ENCODE measurements at regions of chr11 and their contacts with region 1.

Region 1: GRCh38 chr11:73288873-73289707 is 17.0 kb downstream of the P2RY6 start:
- DNase-seq: peak; percentile 62 to 75 (median 73)
- H3K4me3 ChIP-seq: peak overlapping the region in 4 of 7 experiments; percentile 39 to 67 (median 52)
- H3K27ac ChIP-seq: no peak overlapping the region
- H3K4me1 ChIP-seq: peaks cover 0 to 57% (median 27%) of the 10 kb centered on the region in 4 experiments
- H3K27me3 ChIP-seq: no peaks in the 10 kb centered on the region

Region 2: GRCh38 chr11:72831513-72832300 is 457.4 kb before region 1 on chr11:
- CTCF ChIA-PET with region 1: interaction called, 18 read pairs
- POLR2A ChIA-PET with region 1: no interaction called
- DNase-seq: peak; percentile 62 to 81 (median 79)
- H3K4me3 ChIP-seq: no peak overlapping the region
- H3K27ac ChIP-seq: no peak overlapping the region
- H3K4me1 ChIP-seq: peaks cover 0 to 11% (median 4%) of the 10 kb centered on the region in 4 experiments
- H3K27me3 ChIP-seq: no peaks in the 10 kb centered on the region

Region 3: GRCh38 chr11:73168925-73169579 is 120.0 kb before region 1 on chr11:
- CTCF ChIA-PET with region 1: no interaction called
- POLR2A ChIA-PET with region 1: no interaction called
- DNase-seq: no peak
- H3K4me3 ChIP-seq: no peak overlapping the region
- H3K27ac ChIP-seq: no peak overlapping the region
- H3K4me1 ChIP-seq: peaks cover 5 to 29% (median 10%) of the 10 kb centered on the region in 4 experiments
- H3K27me3 ChIP-seq: no peaks in the 10 kb centered on the region

Region 4: GRCh38 chr11:73184953-73185671 is 104.0 kb before region 1 on chr11:
- CTCF ChIA-PET with region 1: interaction called, 92 read pairs
- POLR2A ChIA-PET with region 1: no interaction called
- DNase-seq: peak; percentile 57 to 84 (median 80)
- H3K4me3 ChIP-seq: peak overlapping the region in 6 of 7 experiments; percentile 2 to 76 (median 50)
- H3K27ac ChIP-seq: no peak overlapping the region
- H3K4me1 ChIP-seq: peaks cover 0 to 59% (median 45%) of the 10 kb centered on the region in 4 experiments
- H3K27me3 ChIP-seq: no peaks in the 10 kb centered on the region

Region 5: GRCh38 chr11:73242251-73243079 is 46.6 kb before region 1 on chr11:
- CTCF ChIA-PET with region 1: interaction called, 97 read pairs
- POLR2A ChIA-PET with region 1: no interaction called
- DNase-seq: peak; percentile 66 to 80 (median 78)
- H3K4me3 ChIP-seq: peak overlapping the region in 4 of 7 experiments; percentile 16 to 70 (median 54)
- H3K27ac ChIP-seq: no peak overlapping the region
- H3K4me1 ChIP-seq: peaks cover 0 to 11% (median 9%) of the 10 kb centered on the region in 4 experiments
- H3K27me3 ChIP-seq: no peaks in the 10 kb centered on the region

Region 6: DNA sequence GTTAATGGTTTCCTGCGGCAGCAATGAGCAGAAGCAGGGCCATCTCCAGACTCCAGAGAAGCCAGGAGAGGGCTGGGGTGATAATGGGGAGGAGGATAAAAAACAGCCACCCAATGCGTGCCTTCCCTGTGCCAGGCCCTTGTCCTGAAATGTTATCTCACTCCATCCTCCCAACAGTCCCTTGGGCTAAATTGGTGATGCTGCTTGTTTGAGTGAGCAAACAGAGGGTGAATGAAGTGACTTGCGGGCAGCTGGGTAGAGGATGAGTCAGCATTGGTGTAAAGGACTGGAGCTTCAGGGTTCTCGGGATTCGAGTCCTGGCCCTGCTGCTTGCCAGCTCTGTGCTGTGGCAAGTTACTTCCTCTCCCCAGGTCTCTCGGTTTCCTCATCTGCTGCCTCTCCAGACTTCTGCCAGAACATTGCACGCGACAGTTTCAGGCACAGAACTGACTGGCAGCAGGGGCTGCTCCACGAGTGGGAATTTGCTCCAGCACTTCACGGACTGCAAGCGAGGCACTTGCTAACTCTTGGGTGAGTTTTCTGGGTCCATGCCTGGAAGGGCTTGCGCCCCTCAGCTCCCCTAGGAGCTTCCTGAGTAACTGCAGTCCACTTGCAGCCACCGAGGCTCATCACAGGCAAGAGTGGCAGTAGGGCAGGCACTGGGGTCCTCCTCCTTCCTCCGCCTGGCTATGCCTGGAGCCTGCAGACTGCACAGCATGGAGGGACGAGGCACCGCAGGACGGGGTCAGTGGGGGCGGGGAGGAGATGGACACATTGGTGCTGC is 17.0 kb before region 1 on chr11 and contains the start of gene P2RY6:
- CTCF ChIA-PET with region 1: interaction called, 154 read pairs
- POLR2A ChIA-PET with region 1: no interaction called
- DNase-seq: peak in 2 of 3 donors; percentile 56 to 60
- H3K4me3 ChIP-seq: peak within 1 kb of the TSS in 1 of 7 experiments; percentile 4
- H3K27ac ChIP-seq: no peak within 1 kb of the TSS
- H3K4me1 ChIP-seq: peaks cover 0 to 68% (median 10%) of the 10 kb centered on the region in 4 experiments
- H3K27me3 ChIP-seq: no peaks in the 10 kb centered on the region

Region 7: DNA sequence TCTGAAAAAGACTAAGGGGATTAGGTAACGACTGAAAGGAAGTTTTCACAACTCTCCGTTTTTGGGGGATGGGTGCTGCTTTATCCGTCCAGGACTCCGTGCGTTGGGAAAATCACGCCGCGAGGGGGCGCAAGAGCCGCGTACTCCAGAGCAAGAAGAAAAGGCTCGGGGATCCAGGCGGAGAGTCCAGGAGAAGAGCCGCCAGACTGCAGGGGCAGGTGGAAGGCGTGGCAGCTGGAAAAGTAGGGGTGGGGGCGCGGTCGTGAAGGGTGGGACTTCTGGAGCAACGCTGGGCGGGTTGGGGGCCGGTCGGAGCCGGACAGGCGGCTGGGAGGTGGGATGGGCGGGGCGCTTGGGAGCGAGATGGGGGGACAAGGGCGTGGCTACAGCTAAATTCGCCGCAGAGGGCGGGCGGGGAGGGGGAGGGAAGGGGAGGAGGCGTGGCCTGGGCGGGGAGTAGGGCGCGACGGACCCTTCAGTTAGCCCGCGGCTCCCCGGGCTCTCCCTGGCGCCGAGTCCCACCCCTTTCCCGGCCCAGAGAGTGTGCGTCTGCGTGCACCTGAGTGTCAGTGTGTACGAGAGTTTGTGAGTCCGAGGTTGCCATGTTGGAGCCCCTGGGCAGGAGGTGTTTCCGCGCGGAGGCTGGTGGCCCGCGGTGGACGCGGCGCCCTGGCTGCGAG is 18.4 kb after region 1 on chr11:
- CTCF ChIA-PET with region 1: interaction called, 172 read pairs
- POLR2A ChIA-PET with region 1: interaction called, 3 read pairs
- DNase-seq: peak; percentile 96 to 98 (median 97)
- H3K4me3 ChIP-seq: peak overlapping the region; percentile 57 to 91 (median 81)
- H3K27ac ChIP-seq: peak overlapping the region; percentile 40 to 50
- H3K4me1 ChIP-seq: peaks cover 3 to 50% (median 49%) of the 10 kb centered on the region in 4 experiments
- H3K27me3 ChIP-seq: no peaks in the 10 kb centered on the region

Region 8: DNA sequence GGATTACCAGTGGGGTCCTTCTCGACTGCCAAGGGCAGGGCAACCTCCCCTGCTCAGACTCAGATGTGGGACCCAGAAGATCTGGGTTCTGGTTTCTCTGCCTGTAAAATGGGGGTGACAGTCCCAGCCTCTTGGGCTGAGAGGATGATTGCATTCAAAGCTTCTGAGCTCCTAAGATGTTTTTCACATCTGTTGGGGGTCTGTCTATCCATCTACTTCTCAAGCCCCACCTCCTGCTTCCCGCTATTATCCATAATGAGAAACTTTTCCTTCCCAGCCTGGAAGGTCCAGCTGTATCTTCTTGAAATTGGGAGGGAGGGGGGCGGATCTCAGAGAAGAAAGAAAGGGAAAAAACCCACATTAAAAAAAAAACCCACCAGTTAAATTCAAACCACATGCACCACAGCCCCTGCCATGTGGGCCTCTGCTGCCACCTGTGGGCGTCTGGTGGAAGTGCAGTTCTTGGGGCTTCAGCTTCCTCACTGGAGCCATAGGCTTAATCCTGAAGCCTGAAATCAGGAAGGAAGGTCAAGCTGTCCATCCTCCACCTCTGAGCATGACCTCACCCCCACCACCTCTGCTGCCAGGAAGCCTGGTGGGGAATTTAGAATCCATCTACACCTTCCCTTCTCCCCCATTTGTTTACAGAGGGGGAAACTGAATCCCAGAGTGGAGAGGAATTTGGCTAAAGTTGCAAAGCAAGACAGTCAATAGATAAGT is 46.3 kb after region 1 on chr11:
- CTCF ChIA-PET with region 1: interaction called, 200 read pairs
- POLR2A ChIA-PET with region 1: no interaction called
- DNase-seq: peak; percentile 61 to 76 (median 66)
- H3K4me3 ChIP-seq: peak overlapping the region in 1 of 7 experiments; percentile 19
- H3K27ac ChIP-seq: no peak overlapping the region
- H3K4me1 ChIP-seq: peaks cover 0 to 48% (median 44%) of the 10 kb centered on the region in 4 experiments
- H3K27me3 ChIP-seq: no peaks in the 10 kb centered on the region

Region 9: DNA sequence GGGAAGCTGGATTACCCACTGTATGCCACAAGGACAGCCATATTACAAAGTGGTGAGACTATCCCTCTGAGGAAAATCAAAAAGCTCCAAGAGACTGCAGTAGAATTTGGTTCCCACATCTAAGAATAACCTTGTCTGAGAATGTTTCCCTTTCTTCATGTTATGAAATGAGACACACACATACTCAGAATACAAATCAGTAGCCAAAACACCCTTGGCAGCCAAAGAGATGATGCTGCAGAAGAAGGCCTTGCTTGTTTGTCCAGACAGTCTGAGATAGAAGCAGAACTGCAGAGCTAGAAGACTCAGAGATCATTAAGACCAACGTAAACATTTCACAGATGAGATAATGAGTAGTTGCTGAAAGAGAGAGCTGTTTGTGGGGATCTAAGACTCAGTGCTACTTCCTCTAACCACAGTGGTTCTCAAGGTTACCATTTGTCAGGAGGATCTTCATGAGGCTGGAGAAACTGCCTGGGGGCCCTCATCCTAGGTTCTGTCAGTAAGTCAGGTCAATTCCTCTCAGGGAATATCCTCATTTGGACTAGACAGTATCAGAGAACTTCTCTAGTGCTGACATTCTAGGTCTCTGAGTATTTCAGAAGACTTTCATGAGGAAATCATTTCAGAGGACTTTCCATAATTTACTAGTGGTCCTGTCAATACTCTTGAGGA is 126.0 kb after region 1 on chr11:
- CTCF ChIA-PET with region 1: no interaction called
- POLR2A ChIA-PET with region 1: no interaction called
- DNase-seq: peak in 2 of 3 donors; percentile 38 to 46
- H3K4me3 ChIP-seq: no peak overlapping the region
- H3K27ac ChIP-seq: no peak overlapping the region
- H3K4me1 ChIP-seq: peaks cover 6 to 17% (median 8%) of the 10 kb centered on the region in 4 experiments
- H3K27me3 ChIP-seq: no peaks in the 10 kb centered on the region

Measured in common myeloid progenitor, CD34-positive (primary cell).